ENCODE measurements at regions of chr11 and their contacts with region 1.

Region 1: DNA sequence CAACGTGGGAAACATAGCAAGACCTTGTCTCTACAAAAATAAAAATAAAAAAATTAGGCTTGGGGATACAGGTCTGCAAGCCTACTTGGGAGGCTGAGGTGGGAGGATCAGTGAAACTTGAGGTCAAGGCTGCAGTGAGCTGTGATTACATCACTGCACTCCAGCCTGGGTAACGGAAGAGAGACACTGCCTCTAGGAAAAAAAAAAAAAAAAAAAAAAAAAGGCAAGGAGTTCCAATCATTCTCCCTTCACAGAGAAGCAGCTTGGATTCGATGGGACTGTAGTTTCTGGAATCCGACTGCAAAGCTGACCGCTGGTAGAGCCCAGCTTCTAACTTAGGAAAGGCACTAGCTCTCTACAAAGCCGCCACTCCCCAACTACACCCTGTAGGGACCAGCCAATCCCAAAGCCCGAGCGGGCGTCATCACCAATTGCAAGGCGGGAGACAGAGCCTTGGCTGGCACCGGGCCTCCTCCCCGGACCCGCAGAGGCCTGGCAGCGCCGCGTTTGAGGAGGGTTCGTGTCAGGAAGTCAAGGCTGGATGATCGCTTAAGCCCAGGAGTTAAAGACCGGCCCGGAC is 699 bp upstream of the DDB2 start:
- DNase-seq: peak; percentile 89
- H3K4me3 Mint-ChIP-seq: peak overlapping the region; percentile 71
- H3K27ac Mint-ChIP-seq: peak overlapping the region; percentile 80
- H3K4me1 Mint-ChIP-seq: peaks cover 34% of the 10 kb centered on the region
- H3K27me3 Mint-ChIP-seq: no peaks in the 10 kb centered on the region
- CTCF ChIP-seq: no peak

Region 2: DNA sequence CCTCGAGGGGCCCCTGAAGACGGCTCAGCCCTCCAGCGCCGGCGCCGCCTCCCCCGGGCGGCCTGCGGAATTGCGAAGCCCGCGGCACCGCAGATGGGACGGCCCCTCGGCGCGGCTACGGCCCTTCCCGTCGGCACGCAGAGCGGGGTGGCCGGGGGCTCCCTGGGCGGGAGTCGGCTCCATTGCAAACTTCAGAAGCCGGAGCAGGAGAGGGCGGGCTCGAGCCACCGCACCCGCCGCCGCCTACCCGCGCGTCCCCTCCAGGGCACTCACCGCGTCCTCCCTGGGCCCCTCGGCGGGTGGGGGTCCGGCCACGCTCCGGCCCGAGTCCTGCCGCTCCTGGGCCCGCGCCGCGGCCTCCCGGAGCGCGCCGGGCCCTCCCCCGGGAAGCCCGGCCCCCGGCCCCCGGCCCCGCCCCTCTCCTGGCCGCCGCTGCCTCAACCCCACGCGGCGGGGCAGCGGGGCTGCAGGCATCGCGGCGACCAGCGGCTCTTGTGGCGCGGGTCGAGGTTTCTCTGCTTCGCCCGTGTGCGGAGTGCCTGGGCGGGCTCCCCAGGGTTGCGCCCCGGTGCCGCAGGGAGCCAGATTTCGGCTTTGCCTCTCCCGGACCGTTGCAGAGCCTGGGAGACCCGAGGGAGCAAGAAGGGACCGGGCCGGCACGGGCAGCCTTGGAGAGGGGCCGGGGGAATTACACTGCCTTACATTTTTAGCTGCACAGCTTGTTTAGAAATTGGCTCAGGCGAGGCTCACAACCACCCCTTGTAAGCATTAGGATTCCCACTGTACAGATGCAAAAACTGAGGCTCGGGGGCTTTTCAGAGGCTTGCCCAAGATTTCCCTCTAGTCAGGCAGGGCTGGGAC is 27.8 kb before region 1 on chr11 and contains the start of gene PACSIN3:
- CTCF ChIA-PET with region 1: interaction called, 13 read pairs
- intact Hi-C with region 1: no loop called
- DNase-seq: peak; percentile 71
- H3K4me3 Mint-ChIP-seq: peak within 1 kb of the TSS; percentile 81
- H3K27ac Mint-ChIP-seq: no peak within 1 kb of the TSS
- H3K4me1 Mint-ChIP-seq: peaks cover 9% of the 10 kb centered on the region
- H3K27me3 Mint-ChIP-seq: no peaks in the 10 kb centered on the region
- CTCF ChIP-seq: no peak
- total RNA-seq, gene PACSIN3: 22.1 and 26.5 TPM in 2 replicates

Region 3: DNA sequence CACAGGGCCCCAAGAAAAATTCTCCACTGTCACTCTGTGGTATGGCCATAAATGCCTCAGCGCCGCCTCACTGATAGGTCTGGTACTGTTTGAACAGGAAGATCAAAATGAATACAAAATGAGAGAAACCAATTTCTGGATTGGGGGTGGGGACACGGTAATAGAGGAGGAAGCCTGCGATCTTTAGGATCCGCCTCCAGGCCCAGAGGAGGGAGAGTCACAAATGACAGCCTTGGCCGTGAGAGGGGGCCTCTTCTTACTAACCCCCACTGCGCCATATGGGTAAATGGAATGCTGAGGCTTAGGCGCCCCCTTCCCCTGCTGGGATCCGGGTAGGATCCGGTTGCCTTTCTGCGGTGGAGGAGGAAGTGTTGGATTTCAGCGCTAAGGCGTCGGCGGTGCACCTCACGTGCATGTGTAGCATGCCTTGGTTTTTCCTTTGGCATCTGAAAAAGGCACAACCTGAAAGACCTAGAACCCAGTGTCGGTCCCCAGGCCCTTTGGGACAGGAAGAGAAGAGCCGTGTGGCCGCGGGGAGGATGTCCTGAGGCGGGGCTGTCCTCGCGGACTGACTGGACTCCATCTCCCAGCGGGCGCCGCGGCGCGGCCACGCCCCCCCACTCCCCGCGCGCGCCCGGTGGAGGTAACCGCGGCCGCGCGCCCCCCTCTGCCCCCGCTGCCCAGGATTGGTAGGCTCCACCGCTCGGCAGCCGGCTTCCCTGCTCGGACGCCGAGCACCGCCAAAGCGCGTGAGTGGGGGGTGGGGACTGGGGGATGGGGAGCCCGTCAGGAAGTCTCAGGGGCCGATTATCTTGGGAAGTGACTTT is 55.1 kb after region 1 on chr11:
- CTCF ChIA-PET with region 1: no interaction called
- intact Hi-C with region 1: no loop called
- DNase-seq: peak; percentile 89
- H3K4me3 Mint-ChIP-seq: peak overlapping the region; percentile 59
- H3K27ac Mint-ChIP-seq: peak overlapping the region; percentile 95
- H3K4me1 Mint-ChIP-seq: peaks cover 33% of the 10 kb centered on the region
- H3K27me3 Mint-ChIP-seq: no peaks in the 10 kb centered on the region
- CTCF ChIP-seq: no peak

Measured in Calu3 (cell line).